ENCODE measurements at regions of chr7 and their contacts with region 1.

Region 1: DNA sequence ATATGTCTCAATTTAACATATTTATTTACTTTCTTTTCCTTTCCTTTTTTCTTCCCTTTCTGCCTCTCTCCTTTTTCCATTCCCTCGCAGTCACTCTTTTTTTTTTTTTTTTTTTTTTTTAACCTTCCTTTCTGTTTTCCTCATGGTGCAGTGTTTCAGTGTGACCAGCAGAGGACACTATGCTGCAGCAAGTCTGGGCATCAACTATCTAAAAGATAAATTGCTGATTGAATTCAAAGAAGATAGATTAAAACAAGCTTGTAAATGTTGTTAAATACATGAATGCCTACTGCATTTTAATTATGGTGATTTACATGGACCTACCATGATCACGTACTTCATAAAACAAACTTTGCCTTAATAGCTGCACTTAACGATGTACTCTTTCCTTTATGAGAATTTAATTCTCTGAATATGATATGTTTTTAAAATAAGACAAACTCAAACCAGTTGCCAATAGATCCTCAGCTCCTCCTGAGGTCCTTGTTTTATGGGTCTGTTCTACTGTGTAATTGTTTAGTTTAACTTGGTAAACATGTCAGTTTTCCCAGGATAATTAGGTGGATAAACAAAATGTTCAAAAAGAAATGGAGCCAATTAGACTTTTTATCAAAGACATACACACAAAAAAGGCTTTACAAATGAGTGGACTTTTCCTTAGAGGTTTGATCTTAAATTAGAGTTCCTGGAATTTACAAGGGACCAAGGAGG is 101.0 kb upstream of the AGR3 start:
- DNase-seq: peak; percentile 75
- H3K4me3 ChIP-seq: no peak overlapping the region
- H3K27ac ChIP-seq: peak overlapping the region; percentile 21
- H3K4me1 ChIP-seq: peaks cover 18% of the 10 kb centered on the region
- H3K27me3 ChIP-seq: no peaks in the 10 kb centered on the region
- CTCF ChIP-seq: peak; percentile 99

Region 2: DNA sequence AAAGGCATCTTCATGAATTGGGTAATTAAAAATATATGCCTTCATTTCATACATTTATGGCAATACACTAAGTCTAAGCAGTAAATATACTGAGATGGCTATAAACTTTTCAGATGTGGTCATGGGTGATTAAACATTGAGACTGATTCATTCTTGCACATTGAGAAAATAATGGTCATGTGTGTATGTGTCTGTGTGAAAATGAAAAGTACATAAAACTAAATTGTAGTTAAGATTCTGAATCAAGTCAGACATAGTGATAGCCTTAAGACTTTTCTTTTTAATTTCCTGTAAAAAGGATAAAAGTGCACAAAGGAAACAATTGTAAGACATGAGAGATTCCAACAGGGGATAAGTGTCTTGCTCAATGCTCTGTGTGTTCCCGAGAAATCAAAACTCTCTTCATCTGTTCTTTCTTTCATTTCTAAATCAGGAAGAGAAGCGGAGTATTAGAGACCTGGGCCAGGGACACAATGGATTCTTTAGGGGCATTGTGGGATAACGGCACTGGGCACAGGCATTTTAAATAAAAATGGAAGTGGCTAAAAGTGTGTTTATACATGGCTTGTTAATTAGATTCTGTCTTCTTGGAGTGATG is 31.2 kb before region 1 on chr7:
- CTCF ChIA-PET with region 1: no interaction called
- POLR2A ChIA-PET with region 1: no interaction called
- intact Hi-C with region 1: no loop called
- DNase-seq: peak; percentile 20
- H3K4me3 ChIP-seq: peak overlapping the region; percentile 21
- H3K27ac ChIP-seq: no peak overlapping the region
- H3K4me1 ChIP-seq: peaks cover 17% of the 10 kb centered on the region
- H3K27me3 ChIP-seq: no peaks in the 10 kb centered on the region
- CTCF ChIP-seq: no peak

Region 3: GRCh38 chr7:17041324-17041723 is 58.5 kb after region 1 on chr7:
- CTCF ChIA-PET with region 1: interaction called, 4 read pairs
- POLR2A ChIA-PET with region 1: no interaction called
- intact Hi-C with region 1: loop called (anchors 1 kb)
- DNase-seq: peak; percentile 97
- H3K4me3 ChIP-seq: peak overlapping the region; percentile 9
- H3K27ac ChIP-seq: peak overlapping the region; percentile 96
- H3K4me1 ChIP-seq: peaks cover 81% of the 10 kb centered on the region
- H3K27me3 ChIP-seq: no peaks in the 10 kb centered on the region
- CTCF ChIP-seq: no peak

Region 4: GRCh38 chr7:17298207-17298839 is 315.5 kb after region 1 on chr7 and contains the start of gene AHR:
- CTCF ChIA-PET with region 1: interaction called, 8 read pairs
- POLR2A ChIA-PET with region 1: no interaction called
- intact Hi-C with region 1: loop called (anchors 2 kb)
- DNase-seq: peak; percentile 95
- H3K4me3 ChIP-seq: peak within 1 kb of the TSS; percentile 76
- H3K27ac ChIP-seq: no peak within 1 kb of the TSS
- H3K4me1 ChIP-seq: peaks cover 17% of the 10 kb centered on the region
- H3K27me3 ChIP-seq: peaks cover 23% of the 10 kb centered on the region
- CTCF ChIP-seq: no peak
- total RNA-seq, gene AHR: 11.8 and 13.5 TPM in 2 replicates

Region 5: GRCh38 chr7:17646253-17646956 is 663.6 kb after region 1 on chr7:
- CTCF ChIA-PET with region 1: no interaction called
- POLR2A ChIA-PET with region 1: no interaction called
- intact Hi-C with region 1: loop called (anchors 5 kb)
- DNase-seq: peak; percentile 34
- H3K4me3 ChIP-seq: no peak overlapping the region
- H3K27ac ChIP-seq: no peak overlapping the region
- H3K4me1 ChIP-seq: no peaks in the 10 kb centered on the region
- H3K27me3 ChIP-seq: no peaks in the 10 kb centered on the region
- CTCF ChIP-seq: peak; percentile 54; the same call in 1 of the 2 replicates

Region 6: DNA sequence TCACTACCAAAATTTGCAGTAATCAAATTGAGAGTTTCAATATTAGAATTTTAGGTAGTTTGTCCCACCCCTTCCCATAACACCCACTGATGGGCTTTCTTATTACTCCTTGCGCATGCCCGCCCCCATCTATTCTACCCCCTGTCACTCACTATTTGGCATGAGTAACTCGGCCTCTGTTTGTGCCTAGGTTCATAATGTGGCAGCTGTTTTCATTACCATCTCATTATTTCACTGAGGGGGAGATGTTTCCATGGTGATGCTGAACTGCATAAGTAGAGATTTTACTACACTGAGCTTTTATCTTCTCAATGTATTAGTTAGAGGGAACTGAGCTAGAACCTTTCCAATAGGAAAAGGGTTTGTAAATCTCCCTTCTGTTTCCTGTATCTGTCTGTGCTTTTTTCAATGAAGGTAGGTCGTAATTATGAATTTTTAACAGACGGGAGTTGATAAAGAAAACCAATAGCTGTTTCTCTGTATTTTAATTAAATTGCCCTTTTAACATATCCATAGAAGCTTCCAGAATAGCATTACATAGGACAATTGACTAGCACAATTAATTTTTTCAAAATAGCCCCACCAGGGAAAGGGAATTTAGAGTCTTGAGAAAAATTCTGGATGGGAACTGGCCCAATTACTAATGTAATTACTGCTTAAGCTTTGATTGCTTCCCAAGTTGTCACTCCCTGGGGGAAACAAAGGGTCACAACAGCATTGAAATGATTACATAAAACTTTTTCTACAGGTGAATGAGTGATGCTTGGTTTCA is 1011.5 kb after region 1 on chr7:
- CTCF ChIA-PET with region 1: no interaction called
- POLR2A ChIA-PET with region 1: no interaction called
- intact Hi-C with region 1: no loop called
- DNase-seq: peak; percentile 28
- H3K4me3 ChIP-seq: no peak overlapping the region
- H3K27ac ChIP-seq: no peak overlapping the region
- H3K4me1 ChIP-seq: no peaks in the 10 kb centered on the region
- H3K27me3 ChIP-seq: no peaks in the 10 kb centered on the region
- CTCF ChIP-seq: no peak